ENCODE measurements at regions of chr1 and their contacts with region 1.

Region 1: DNA sequence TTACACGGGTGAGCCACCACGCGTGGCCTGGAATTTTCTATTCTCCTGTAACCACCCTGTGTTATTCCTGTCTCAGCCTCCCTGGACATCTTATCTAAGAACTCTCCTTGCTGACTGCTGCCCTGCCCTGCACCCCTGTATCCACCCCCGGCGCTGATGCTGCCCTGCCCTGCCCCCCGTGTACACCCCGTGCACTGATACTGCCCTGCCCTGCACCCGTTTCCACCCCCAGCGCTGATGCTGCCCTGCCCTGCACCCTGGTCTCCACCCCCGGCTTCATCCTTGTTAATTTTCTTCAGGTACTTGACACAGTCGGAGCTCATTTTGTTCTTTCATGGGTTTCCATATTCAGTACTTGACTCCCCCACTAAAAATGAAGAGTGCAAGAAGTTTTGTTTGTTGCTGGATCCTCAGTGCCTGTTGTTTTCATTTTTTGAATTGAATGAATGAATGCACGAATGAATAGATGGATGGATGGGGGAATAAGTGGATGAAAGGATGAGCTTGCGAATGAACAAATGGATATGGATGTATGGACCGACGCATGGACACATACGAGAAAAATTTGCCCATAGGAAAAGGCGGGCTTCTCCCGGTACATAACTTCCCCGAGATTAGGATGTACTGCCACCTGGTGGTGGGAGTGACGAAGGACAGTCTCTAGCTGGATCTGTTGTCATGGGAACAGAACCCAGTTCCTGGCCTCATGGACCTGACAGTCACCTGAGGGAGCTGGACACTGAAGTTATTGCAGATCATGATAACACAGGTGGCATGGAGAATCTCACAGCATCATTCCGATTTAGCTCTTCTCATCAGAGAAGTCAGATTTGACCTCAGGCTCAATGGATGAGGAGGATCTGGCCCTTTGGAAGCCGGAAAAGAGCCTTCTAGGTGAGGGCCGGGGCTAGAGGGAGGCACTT is 14.9 kb downstream of the AADACL4 start:
- DNase-seq: peak; percentile 83
- H3K4me3 ChIP-seq: no peak overlapping the region
- H3K27ac ChIP-seq: no peak overlapping the region
- H3K4me1 ChIP-seq: peaks cover 0 to 4% (median 0%) of the 10 kb centered on the region in 4 donors
- H3K27me3 ChIP-seq: no peaks in the 10 kb centered on the region
- CTCF ChIP-seq: peak; percentile 88 to 98 (median 93)
- EP300 ChIP-seq: no peak
- POLR2A ChIP-seq: no peak

Region 2: GRCh38 chr1:12132092-12132491 is 526.7 kb before region 1 on chr1:
- intact Hi-C with region 1: loop called (anchors 10 kb)
- DNase-seq: no peak
- H3K4me3 ChIP-seq: no peak overlapping the region
- H3K27ac ChIP-seq: peak overlapping the region in 2 of 4 donors; percentile 34 to 58
- H3K4me1 ChIP-seq: peaks cover 0 to 7% (median 3%) of the 10 kb centered on the region in 4 donors
- H3K27me3 ChIP-seq: no peaks in the 10 kb centered on the region
- CTCF ChIP-seq: no peak
- EP300 ChIP-seq: no peak
- POLR2A ChIP-seq: no peak

Region 3: GRCh38 chr1:12275369-12275768 is 383.4 kb before region 1 on chr1:
- intact Hi-C with region 1: loop called (anchors 1 kb)
- DNase-seq: no peak
- H3K4me3 ChIP-seq: no peak overlapping the region
- H3K27ac ChIP-seq: no peak overlapping the region
- H3K4me1 ChIP-seq: no peaks in the 10 kb centered on the region
- H3K27me3 ChIP-seq: no peaks in the 10 kb centered on the region
- CTCF ChIP-seq: peak; percentile 24 to 63 (median 51)
- EP300 ChIP-seq: no peak
- POLR2A ChIP-seq: no peak

Region 4: DNA sequence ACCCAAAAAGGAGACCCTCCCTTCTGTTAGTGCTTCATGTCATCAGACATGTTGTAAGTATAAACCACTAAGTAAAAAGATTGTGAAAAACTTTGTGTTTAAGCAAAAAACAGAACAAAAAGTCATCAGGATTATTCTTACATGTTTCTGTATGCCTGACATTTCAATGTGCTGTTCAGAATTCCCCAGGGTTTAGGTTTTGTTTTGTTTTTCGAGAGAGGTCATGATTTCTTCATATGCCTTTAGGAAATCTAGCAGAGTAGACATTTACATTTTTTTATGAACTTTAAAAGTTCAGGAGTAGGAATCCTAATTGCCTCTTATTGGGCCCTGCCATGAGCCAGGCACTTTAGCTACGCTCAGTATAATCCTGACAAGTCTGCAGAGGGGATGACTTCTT is 343.6 kb before region 1 on chr1:
- intact Hi-C with region 1: loop called (anchors 1 kb)
- DNase-seq: no peak
- H3K4me3 ChIP-seq: no peak overlapping the region
- H3K27ac ChIP-seq: peak overlapping the region; percentile 73 to 85 (median 76)
- H3K4me1 ChIP-seq: peaks cover 0 to 41% (median 36%) of the 10 kb centered on the region in 4 donors
- H3K27me3 ChIP-seq: no peaks in the 10 kb centered on the region
- CTCF ChIP-seq: no peak
- EP300 ChIP-seq: no peak
- POLR2A ChIP-seq: no peak

Region 5: DNA sequence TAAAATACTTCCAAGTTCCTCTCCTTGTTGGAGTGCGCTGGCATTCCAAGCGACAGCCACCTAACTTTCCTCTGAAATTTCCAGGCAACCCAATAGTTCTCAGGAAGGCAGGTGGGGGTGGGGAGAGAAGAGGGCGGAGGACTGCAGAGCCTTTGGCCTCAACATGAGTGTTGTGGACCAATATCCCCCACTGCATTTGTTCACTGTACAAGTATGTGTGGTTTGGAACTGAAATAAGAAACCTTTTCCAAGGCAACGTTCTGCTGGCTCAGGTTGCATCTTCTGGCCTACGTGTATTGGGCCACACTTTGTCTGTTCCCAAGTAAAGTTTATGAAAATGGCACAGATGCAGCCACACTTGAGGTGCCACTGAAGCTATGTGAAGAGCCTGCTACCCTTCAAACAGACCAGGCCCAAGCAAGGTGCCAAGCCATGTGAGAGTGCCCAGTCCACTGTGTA is 194.2 kb before region 1 on chr1:
- intact Hi-C with region 1: no loop called
- DNase-seq: peak; percentile 89
- H3K4me3 ChIP-seq: no peak overlapping the region
- H3K27ac ChIP-seq: peak overlapping the region; percentile 73 to 89 (median 86)
- H3K4me1 ChIP-seq: peaks cover 0 to 68% (median 66%) of the 10 kb centered on the region in 4 donors
- H3K27me3 ChIP-seq: no peaks in the 10 kb centered on the region
- CTCF ChIP-seq: no peak
- EP300 ChIP-seq: peak in 1 of 4 donors; percentile 65
- POLR2A ChIP-seq: no peak

Measured in sigmoid colon (tissue), 7 donors.